Motor neuron (in vitro differentiated cells): ENCODE measurements at regions of chr20 and their contacts with region 1.

Region 1: GRCh38 chr20:60851826-60852704 is 400.0 kb upstream of the CDH4 start:
- ATAC-seq: peak; percentile 44 to 78 (median 61)
- H3K4me3 ChIP-seq: no peak overlapping the region
- H3K27ac ChIP-seq: no peak overlapping the region
- H3K4me1 ChIP-seq: no peaks in the 10 kb centered on the region

Region 2: GRCh38 chr20:61234803-61235113 is 382.7 kb after region 1 on chr20:
- in situ Hi-C with region 1: loop called in 1 of 9 experiments (anchors 25 kb)
- ATAC-seq: no peak
- H3K4me3 ChIP-seq: no peak overlapping the region
- H3K27ac ChIP-seq: no peak overlapping the region
- H3K4me1 ChIP-seq: peaks cover 12 to 20% of the 10 kb centered on the region in 2 donors